Heart left ventricle (tissue), 16 donors: ENCODE measurements at regions of chr14 and their contacts with region 1.

Region 1: GRCh38 chr14:91323671-91324605 is 79.4 kb upstream of the GPR68 start:
- DNase-seq: peak; percentile 86 to 92 (median 87)
- ATAC-seq: peak; percentile 77 to 93 (median 86)
- H3K4me3 ChIP-seq: peak overlapping the region in 11 of 12 donors; percentile 22 to 61 (median 49)
- H3K27ac ChIP-seq: peak overlapping the region; percentile 50 to 89 (median 76)
- H3K4me1 ChIP-seq: peaks cover 0 to 67% (median 51%) of the 10 kb centered on the region in 12 donors
- H3K27me3 ChIP-seq: no peaks in the 10 kb centered on the region
- CTCF ChIP-seq: peak; percentile 94 to 98 (median 96)
- POLR2A ChIP-seq: peak in 1 of 2 donors; percentile 21

Region 2: DNA sequence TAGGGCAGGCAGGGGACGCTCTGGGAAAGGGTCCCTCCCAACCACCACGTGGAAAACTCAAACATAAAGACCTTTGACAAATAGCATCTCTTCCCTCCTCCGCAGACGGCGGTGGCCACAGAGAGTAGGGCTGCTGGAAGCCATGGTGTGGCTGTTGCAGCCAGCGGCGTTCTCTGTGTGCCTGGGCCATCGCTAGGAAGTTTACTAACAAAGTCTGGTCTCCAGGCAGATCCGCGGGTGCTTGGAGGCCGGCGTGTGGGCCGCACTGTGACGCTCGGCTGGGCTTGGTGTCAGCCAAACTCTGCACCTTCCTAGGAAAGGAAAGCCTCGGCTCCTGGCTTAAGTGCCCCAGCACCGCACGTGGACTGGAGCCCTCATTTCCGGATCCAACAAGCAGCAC is 28.1 kb after region 1 on chr14:
- intact Hi-C with region 1: loop called in 1 of 10 experiments (anchors 1 kb)
- DNase-seq: peak in 4 of 5 donors; percentile 71 to 80 (median 78)
- ATAC-seq: peak; percentile 81 to 93 (median 91)
- H3K4me3 ChIP-seq: peak overlapping the region in 2 of 12 donors; percentile 15 to 20
- H3K27ac ChIP-seq: peak overlapping the region in 7 of 12 donors; percentile 8 to 69 (median 45)
- H3K4me1 ChIP-seq: peaks cover 0 to 57% (median 19%) of the 10 kb centered on the region in 12 donors
- H3K27me3 ChIP-seq: peaks cover 0 to 9% (median 0%) of the 10 kb centered on the region in 9 donors
- CTCF ChIP-seq: no peak
- POLR2A ChIP-seq: no peak

Region 3: DNA sequence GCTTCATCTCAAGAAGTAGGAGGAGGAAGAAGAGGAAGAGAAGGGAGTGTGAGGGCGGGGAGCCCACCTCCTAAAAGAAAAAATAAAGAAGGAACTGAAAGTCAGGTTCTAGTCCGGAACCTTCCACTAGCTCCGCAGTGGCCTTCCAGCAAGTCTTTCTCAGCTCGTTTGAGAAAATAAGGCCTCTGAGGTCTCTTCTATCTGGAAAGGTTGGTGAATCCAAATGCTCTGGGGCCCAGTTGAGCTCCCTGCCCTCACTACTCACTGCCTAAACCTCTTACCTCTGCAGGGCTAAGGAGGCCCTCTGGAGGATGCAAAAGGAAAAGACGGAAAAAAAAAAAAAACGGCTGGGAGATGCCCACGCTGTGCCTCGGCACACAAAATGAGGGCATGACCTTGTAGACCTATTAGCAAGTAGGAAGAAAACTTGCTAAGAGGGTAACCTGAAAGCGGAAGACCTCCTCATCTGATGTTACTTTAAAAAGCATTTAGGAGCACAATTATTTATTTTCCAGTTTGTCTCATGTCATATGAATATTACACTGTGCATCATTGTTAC is 587.6 kb after region 1 on chr14:
- intact Hi-C with region 1: loop called in 2 of 10 experiments (anchors 10 kb)
- DNase-seq: no peak
- ATAC-seq: peak; percentile 67 to 85 (median 79)
- H3K4me3 ChIP-seq: no peak overlapping the region
- H3K27ac ChIP-seq: no peak overlapping the region
- H3K4me1 ChIP-seq: peaks cover 0 to 16% (median 0%) of the 10 kb centered on the region in 12 donors
- H3K27me3 ChIP-seq: no peaks in the 10 kb centered on the region
- CTCF ChIP-seq: peak; percentile 22 to 62 (median 42)
- POLR2A ChIP-seq: no peak